GM10248 (cell line): ENCODE measurements at regions of chr2 and their contacts with region 1.

Region 1: GRCh38 chr2:132853128-132853527 is 183.1 kb upstream of the LYPD1 start:
- DNase-seq: no peak
- CTCF ChIP-seq: no peak

Region 2: GRCh38 chr2:132837764-132838163 is 15.4 kb before region 1 on chr2:
- CTCF ChIA-PET with region 1: interaction called, 14 read pairs
- POLR2A ChIA-PET with region 1: no interaction called
- DNase-seq: no peak
- CTCF ChIP-seq: no peak

Region 3: GRCh38 chr2:132991471-132992045 is 138.4 kb after region 1 on chr2:
- CTCF ChIA-PET with region 1: no interaction called
- POLR2A ChIA-PET with region 1: no interaction called
- DNase-seq: no peak
- CTCF ChIP-seq: no peak